Head of caudate nucleus (tissue), 42 donors: ENCODE measurements at regions of chr5 and their contacts with region 1.

Region 1: DNA sequence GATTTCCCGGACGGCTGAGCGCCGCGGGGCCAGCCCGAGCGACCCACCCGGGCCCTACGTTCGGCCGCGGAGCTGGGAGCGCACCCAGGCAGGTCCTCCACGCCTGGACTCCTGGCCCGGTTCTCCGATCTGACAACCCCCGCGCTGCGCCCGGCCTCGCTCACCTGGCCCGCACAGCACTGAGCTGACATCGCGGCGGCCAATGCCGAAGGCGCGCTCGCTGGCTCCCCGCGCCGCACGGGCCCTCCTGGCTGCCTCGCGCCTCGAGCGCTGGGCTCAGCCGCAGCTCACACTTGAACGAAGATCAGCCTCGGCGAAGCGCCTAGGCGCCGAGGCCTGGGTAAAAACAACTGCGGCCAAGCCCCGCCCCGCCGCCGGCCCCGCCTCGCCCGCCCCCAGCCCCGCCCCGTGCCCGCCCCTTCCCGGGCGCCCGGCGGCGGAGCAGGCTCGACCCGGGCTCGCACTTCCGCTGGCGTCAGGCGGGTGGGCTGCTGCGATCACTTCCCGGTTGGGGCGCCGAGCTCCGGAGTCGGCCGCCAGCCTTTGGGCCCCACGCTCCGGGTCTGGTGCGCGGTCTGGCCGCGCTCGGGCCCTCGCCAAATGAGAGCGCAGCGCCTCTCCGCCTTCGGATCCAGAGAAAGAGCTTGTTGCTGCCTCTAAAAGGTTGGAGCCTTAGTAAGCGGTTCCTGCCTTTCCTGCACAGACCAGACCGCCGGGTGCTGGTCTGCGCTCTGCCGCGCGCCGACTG is at the start of gene SERINC5:
- DNase-seq: peak; percentile 69 to 95 (median 89)

Region 2: GRCh38 chr5:80055491-80056170 is 200.3 kb before region 1 on chr5:
- intact Hi-C with region 1: no loop called
- DNase-seq: no peak

Region 3: DNA sequence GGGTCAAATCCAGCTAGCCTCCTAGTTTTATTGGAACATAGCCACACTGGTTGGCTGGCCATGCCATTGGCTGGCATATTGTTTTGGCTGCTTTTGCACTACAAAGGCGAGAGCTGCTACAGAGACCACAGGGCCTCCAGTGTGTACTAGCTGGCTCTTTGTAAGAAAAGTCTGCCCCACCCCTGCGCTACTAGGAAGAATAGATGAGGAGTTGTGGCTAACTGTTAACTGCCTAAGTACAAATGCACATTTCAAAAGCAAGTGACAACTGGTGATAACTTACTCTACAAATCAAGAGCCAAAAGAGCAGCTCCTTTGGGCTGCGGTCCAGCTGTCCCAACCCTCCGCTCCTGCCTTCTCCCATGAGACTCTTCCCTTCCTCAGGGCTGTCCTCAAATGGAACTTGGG is 63.9 kb before region 1 on chr5:
- intact Hi-C with region 1: loop called (anchors 5 kb)
- DNase-seq: peak; percentile 20 to 84 (median 65)

Region 4: GRCh38 chr5:80216753-80217596 is 38.9 kb before region 1 on chr5:
- intact Hi-C with region 1: loop called (anchors 5 kb)
- DNase-seq: peak; percentile 59 to 92 (median 80)

Region 5: DNA sequence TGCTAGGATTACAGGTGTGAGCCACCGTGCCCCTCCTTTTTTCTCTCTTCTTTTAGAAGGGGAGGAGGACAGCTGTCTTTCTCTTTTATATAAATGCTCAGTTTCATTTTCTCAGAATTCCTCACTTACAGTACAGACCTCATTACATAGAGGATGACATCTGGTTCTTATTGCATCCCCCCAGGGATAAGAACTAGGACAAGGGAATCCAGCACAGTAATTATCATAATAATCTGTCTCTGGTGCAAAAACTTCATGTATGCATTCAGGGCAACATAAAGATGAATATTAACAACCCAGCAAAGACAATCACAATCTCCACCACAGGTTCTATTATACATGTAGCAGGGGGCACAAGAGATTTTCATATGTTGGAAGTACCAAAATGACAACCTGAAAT is 69.0 kb after region 1 on chr5:
- intact Hi-C with region 1: no loop called
- DNase-seq: no peak